Spleen (tissue), 13 donors: ENCODE measurements at regions of chr10 and their contacts with region 1.

Region 1: DNA sequence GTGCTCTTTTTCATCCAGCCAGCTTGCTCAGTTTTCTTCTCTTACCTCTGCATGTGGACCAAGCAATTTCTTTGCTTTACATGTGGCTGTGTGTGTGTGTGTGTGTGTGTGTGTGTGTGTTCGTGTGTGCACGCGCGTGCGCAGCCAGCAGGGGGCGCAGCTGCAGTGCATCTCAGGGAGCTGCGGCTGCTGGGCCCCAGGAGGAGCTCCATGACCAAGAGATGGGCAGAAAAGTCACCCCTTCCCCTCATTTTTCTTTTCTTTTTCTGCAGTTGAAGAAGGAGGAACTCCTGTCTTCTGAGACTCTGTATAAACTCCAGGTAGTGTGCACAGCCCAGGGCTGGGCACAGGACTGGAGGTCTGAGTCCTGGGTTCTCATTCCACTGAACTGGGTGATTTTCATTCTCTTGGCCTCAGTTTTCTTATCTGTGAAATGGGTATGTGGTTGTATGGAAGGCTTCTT is 41.8 kb downstream of the BLNK start:
- DNase-seq: peak; percentile 93
- H3K4me3 ChIP-seq: no peak overlapping the region
- H3K27ac ChIP-seq: peak overlapping the region in 5 of 8 donors; percentile 29 to 66 (median 37)
- H3K4me1 ChIP-seq: peaks cover 0 to 37% (median 11%) of the 10 kb centered on the region in 6 donors
- H3K27me3 ChIP-seq: no peaks in the 10 kb centered on the region
- CTCF ChIP-seq: peak; percentile 47 to 100 (median 84)
- POLR2A ChIP-seq: no peak

Region 2: DNA sequence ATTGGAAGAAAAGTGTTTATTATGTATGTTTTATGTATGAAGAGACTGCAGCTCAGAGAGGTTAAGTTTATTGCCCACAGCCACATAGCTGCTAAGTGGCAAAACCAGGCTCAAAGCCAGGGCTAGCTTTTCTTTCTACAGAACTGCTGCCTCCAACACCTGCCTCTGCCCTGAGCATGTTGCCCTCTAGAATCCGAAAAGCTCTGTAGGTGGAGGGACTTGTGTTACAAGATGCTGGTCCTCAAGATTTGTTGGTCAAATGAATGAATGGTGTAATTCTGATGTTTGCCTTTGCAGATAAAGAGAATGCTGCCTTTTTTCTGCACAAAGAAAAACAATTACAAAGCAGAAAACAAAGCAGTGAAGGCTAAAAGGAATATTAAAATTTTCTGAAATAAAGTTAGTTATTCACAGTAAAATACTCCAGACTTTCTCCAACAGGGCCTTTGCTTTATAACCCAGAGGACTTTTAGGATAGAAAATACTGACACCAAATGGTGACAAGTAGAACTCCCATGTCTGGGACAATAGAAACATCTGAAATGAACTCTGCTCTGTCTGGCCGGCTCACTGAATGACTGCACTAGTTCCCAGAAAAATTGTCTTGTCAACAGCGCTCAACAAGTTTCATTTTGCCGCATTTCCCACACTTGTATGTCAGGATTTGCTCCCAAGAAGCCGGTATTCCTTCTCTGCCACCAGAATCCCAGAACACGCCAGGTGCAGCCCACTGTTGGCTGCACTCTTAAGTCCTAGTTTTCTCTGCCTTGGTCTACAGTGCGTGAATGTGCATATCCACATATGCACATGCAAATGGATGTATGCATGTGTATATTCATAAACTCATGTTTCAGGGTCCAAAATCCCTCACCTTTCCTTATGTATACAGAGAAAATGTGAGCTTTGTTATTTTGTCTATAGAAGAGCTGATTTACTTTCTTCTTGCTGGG is 63.6 kb after region 1 on chr10:
- intact Hi-C with region 1: loop called (anchors 2 kb)
- DNase-seq: no peak
- H3K4me3 ChIP-seq: no peak overlapping the region
- H3K27ac ChIP-seq: peak overlapping the region in 2 of 8 donors; percentile 12 to 28
- H3K4me1 ChIP-seq: peaks cover 8 to 57% (median 26%) of the 10 kb centered on the region in 6 donors
- H3K27me3 ChIP-seq: no peaks in the 10 kb centered on the region
- CTCF ChIP-seq: peak; percentile 35 to 82 (median 65)
- POLR2A ChIP-seq: no peak

Region 3: DNA sequence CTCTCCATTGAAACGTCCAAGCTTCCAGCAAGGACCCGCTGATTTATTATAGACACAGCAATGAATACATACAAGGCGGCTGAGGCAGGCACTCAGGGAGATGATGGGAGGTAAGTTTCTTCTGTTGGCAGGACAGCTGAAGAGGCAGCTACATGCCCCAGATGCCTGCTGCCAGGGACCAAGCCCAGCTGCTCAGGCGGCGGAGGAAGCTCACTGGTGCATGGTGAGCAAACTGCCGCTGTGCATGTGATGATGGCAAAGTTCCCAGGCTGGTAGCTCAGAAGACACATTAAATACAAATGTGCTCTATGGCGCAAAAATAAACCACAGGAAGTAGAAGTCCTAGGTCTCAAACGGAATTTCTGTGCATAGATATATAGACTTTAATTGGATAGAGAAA is 76.9 kb after region 1 on chr10:
- intact Hi-C with region 1: no loop called
- DNase-seq: peak; percentile 89
- H3K4me3 ChIP-seq: no peak overlapping the region
- H3K27ac ChIP-seq: peak overlapping the region in 4 of 8 donors; percentile 13 to 42 (median 27)
- H3K4me1 ChIP-seq: peaks cover 3 to 18% (median 13%) of the 10 kb centered on the region in 6 donors
- H3K27me3 ChIP-seq: peaks cover 0 to 18% (median 0%) of the 10 kb centered on the region in 7 donors
- CTCF ChIP-seq: no peak
- POLR2A ChIP-seq: no peak